ENCODE measurements at regions of chr3 and their contacts with region 1.

Region 1: DNA sequence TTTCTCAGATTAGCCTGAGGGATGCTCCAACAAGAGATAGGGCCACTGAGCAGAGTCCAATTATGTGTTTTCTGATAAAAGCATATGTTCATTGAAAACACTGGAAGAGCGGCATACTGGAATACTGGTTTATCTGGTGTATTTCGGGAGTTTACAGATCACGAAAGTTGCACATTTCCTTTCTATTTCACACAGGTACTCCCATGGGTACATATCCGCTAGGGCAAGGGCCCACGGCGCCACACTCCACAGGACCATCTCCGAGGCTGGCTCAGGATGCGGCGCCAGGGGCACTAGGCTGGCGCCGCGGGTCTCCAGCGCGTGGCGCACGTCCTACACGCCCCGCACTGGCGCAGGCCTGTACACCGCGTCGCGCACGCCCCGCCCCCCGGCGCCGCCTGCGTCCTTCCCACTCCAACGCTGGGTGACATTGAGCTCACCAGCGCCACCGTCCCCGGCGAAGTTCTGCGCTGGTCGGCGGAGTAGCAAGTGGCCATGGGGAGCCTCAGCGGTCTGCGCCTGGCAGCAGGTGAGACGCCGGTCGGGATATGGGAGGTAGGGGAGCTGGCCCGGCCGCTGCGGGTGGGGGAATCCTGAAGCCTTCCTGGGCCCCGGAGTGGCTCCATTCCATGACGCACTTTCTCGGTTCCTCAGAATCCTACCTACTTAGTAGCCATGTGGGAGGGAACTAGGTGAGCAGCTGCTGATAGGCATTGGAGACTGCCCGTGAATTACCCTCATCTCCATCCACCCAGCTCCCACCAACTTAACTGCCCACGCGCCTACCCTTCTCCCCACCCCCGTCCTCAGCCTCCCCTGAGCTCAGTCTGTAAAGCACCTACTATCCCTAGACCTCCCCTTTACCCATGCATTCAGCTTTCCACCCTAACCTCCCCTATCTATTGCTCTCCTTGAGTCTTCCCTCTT is at the start of gene FAM162A:
- DNase-seq: peak; percentile 90 to 94 (median 92)
- ATAC-seq: peak; percentile 98
- H3K4me3 ChIP-seq: peak within 1 kb of the TSS; percentile 84
- H3K4me3 Mint-ChIP-seq: peak within 1 kb of the TSS; percentile 87 to 99 (median 95)
- H3K27ac ChIP-seq: peak within 1 kb of the TSS; percentile 85
- H3K27ac Mint-ChIP-seq: peak within 1 kb of the TSS; percentile 88 to 98 (median 95)
- H3K4me1 ChIP-seq: peaks cover 12 to 15% of the 10 kb centered on the region in 2 donors
- H3K4me1 Mint-ChIP-seq: peaks cover 18 to 69% (median 55%) of the 10 kb centered on the region in 7 donors
- H3K27me3 ChIP-seq: no peaks in the 10 kb centered on the region
- H3K27me3 Mint-ChIP-seq: no peaks in the 10 kb centered on the region
- total RNA-seq, gene FAM162A: 17.6 to 73.2 (median 35.5) TPM

Region 2: GRCh38 chr3:121660356-121661171 is 723.5 kb before region 1 on chr3 and contains the start of gene HCLS1:
- CTCF ChIA-PET with region 1: no interaction called
- POLR2A ChIA-PET with region 1: no interaction called
- intact Hi-C with region 1: loop called (anchors 1 to 5 kb)
- DNase-seq: peak; percentile 60 to 87 (median 79)
- ATAC-seq: peak; percentile 87
- H3K4me3 ChIP-seq: peak within 1 kb of the TSS; percentile 90
- H3K4me3 Mint-ChIP-seq: peak within 1 kb of the TSS; percentile 82 to 99 (median 95)
- H3K27ac ChIP-seq: peak within 1 kb of the TSS; percentile 90
- H3K27ac Mint-ChIP-seq: peak within 1 kb of the TSS; percentile 96 to 100 (median 99)
- H3K4me1 ChIP-seq: peaks cover 34 to 41% of the 10 kb centered on the region in 2 donors
- H3K4me1 Mint-ChIP-seq: peaks cover 41 to 68% (median 57%) of the 10 kb centered on the region in 7 donors
- H3K27me3 ChIP-seq: no peaks in the 10 kb centered on the region
- H3K27me3 Mint-ChIP-seq: no peaks in the 10 kb centered on the region
- total RNA-seq, gene HCLS1: 275 to 357 (median 311) TPM

Region 3: DNA sequence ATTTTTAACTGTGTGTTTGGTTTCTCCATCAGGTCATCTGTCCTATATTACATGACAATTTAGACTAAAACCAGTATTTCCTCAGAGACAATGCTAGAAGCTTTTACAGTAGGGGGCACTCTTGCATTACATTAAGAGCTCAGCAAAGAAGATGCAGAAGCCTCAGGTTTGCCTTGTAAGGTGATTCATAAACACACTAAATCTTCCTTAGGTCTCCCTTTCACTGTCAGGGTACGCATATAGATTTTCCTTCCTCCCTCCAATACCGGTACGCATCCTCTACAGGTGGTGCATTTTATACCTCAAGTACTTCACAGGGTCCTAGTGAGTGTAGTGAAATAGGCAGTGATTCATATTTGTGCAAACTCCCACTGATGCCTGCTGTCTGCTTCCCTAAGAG is 282.4 kb before region 1 on chr3:
- CTCF ChIA-PET with region 1: interaction called, 5 read pairs
- POLR2A ChIA-PET with region 1: no interaction called
- intact Hi-C with region 1: loop called in 1 of 2 experiments (anchors 1 kb)
- DNase-seq: peak in 7 of 9 donors; percentile 19 to 66 (median 54)
- ATAC-seq: peak; percentile 79
- H3K4me3 ChIP-seq: no peak overlapping the region
- H3K4me3 Mint-ChIP-seq: peak overlapping the region in 1 of 10 donors; percentile 4
- H3K27ac ChIP-seq: no peak overlapping the region
- H3K27ac Mint-ChIP-seq: no peak overlapping the region
- H3K4me1 ChIP-seq: peaks cover 0 to 5% of the 10 kb centered on the region in 2 donors
- H3K4me1 Mint-ChIP-seq: peaks cover 0 to 37% (median 10%) of the 10 kb centered on the region in 7 donors
- H3K27me3 ChIP-seq: no peaks in the 10 kb centered on the region
- H3K27me3 Mint-ChIP-seq: no peaks in the 10 kb centered on the region

Region 4: GRCh38 chr3:122406198-122406597 is 22.2 kb after region 1 on chr3:
- CTCF ChIA-PET with region 1: no interaction called
- POLR2A ChIA-PET with region 1: interaction called, 11 read pairs
- intact Hi-C with region 1: no loop called
- DNase-seq: no peak
- ATAC-seq: no peak
- H3K4me3 ChIP-seq: no peak overlapping the region
- H3K4me3 Mint-ChIP-seq: no peak overlapping the region
- H3K27ac ChIP-seq: no peak overlapping the region
- H3K27ac Mint-ChIP-seq: no peak overlapping the region
- H3K4me1 ChIP-seq: no peaks in the 10 kb centered on the region
- H3K4me1 Mint-ChIP-seq: peaks cover 0 to 16% (median 7%) of the 10 kb centered on the region in 7 donors
- H3K27me3 ChIP-seq: no peaks in the 10 kb centered on the region
- H3K27me3 Mint-ChIP-seq: no peaks in the 10 kb centered on the region

Region 5: DNA sequence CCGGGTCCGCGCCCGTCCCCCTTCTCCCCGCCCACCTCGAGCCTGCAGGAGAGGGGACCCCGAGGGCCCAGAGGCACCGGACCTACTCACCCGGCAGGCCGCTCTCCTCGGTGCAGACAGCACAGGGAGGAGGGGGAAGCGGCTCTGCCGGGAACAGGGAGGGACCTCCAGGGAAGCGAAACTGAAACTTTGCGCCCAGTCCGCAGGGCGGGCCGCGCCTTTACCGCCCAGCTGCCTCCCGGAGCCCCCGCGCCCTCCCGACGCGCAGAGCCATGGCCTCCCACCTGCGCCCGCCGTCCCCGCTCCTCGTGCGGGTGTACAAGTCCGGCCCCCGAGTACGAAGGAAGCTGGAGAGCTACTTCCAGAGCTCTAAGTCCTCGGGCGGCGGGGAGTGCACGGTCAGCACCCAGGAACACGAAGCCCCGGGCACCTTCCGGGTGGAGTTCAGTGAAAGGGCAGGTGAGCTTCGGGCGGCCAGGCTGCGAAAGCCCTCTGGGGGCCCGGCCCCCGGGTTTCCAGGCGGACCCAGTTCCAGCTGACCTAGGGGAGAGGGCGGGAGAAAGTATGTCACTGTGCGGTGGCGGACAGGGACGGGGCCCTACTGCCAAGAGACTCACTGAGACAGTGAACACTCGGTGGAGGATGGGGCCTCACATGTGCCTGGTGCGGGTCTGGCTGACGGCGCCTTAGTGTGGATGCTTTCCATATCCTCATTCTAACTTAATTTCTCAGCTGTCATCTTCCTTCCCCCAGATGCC is 180.3 kb after region 1 on chr3 and contains the starts of genes DTX3L and PARP9:
- CTCF ChIA-PET with region 1: interaction called, 3 read pairs
- POLR2A ChIA-PET with region 1: interaction called, 5 read pairs
- intact Hi-C with region 1: loop called in 1 of 2 experiments (anchors 1 kb)
- DNase-seq: peak; percentile 50 to 82 (median 77)
- ATAC-seq: peak; percentile 95
- H3K4me3 ChIP-seq: peak within 1 kb of the TSS; percentile 75
- H3K4me3 Mint-ChIP-seq: peak within 1 kb of the TSS; percentile 88 to 100 (median 98)
- H3K27ac ChIP-seq: peak within 1 kb of the TSS; percentile 98
- H3K27ac Mint-ChIP-seq: peak within 1 kb of the TSS; percentile 97 to 99 (median 98)
- H3K4me1 ChIP-seq: peaks cover 34 to 45% of the 10 kb centered on the region in 2 donors
- H3K4me1 Mint-ChIP-seq: peaks cover 58 to 91% (median 79%) of the 10 kb centered on the region in 7 donors
- H3K27me3 ChIP-seq: no peaks in the 10 kb centered on the region
- H3K27me3 Mint-ChIP-seq: no peaks in the 10 kb centered on the region
- total RNA-seq, gene DTX3L: 28.6 to 164 (median 35.8) TPM
- total RNA-seq, gene PARP9: 17.6 to 165 (median 24.4) TPM

Region 6: GRCh38 chr3:123071146-123071545 is 687.1 kb after region 1 on chr3:
- CTCF ChIA-PET with region 1: no interaction called
- POLR2A ChIA-PET with region 1: no interaction called
- intact Hi-C with region 1: no loop called
- DNase-seq: no peak
- ATAC-seq: no peak
- H3K4me3 ChIP-seq: no peak overlapping the region
- H3K4me3 Mint-ChIP-seq: no peak overlapping the region
- H3K27ac ChIP-seq: no peak overlapping the region
- H3K27ac Mint-ChIP-seq: no peak overlapping the region
- H3K4me1 ChIP-seq: peaks cover 7 to 8% of the 10 kb centered on the region in 2 donors
- H3K4me1 Mint-ChIP-seq: peaks cover 24 to 41% (median 33%) of the 10 kb centered on the region in 7 donors
- H3K27me3 ChIP-seq: no peaks in the 10 kb centered on the region
- H3K27me3 Mint-ChIP-seq: no peaks in the 10 kb centered on the region

Region 7: GRCh38 chr3:123584988-123585937 is 1201.2 kb after region 1 on chr3 and contains the start of gene HACD2:
- CTCF ChIA-PET with region 1: no interaction called
- POLR2A ChIA-PET with region 1: interaction called, 7 read pairs
- intact Hi-C with region 1: loop called (anchors 1 kb)
- DNase-seq: peak; percentile 87 to 96 (median 90)
- ATAC-seq: peak; percentile 96
- H3K4me3 ChIP-seq: peak within 1 kb of the TSS; percentile 98
- H3K4me3 Mint-ChIP-seq: peak within 1 kb of the TSS in 3 of 10 donors; percentile 87 to 90 (median 89)
- H3K27ac ChIP-seq: peak within 1 kb of the TSS; percentile 79
- H3K27ac Mint-ChIP-seq: peak within 1 kb of the TSS; percentile 44 to 93 (median 83)
- H3K4me1 ChIP-seq: peaks cover 8 to 13% of the 10 kb centered on the region in 2 donors
- H3K4me1 Mint-ChIP-seq: peaks cover 14 to 32% (median 30%) of the 10 kb centered on the region in 7 donors
- H3K27me3 ChIP-seq: no peaks in the 10 kb centered on the region
- H3K27me3 Mint-ChIP-seq: no peaks in the 10 kb centered on the region
- total RNA-seq, gene HACD2: 15.9 to 28.3 (median 24.0) TPM

Measured in naive thymus-derived CD4-positive, alpha-beta T cell (primary cell).